ENCODE measurements at regions of chr11 and their contacts with region 1.

Region 1: DNA sequence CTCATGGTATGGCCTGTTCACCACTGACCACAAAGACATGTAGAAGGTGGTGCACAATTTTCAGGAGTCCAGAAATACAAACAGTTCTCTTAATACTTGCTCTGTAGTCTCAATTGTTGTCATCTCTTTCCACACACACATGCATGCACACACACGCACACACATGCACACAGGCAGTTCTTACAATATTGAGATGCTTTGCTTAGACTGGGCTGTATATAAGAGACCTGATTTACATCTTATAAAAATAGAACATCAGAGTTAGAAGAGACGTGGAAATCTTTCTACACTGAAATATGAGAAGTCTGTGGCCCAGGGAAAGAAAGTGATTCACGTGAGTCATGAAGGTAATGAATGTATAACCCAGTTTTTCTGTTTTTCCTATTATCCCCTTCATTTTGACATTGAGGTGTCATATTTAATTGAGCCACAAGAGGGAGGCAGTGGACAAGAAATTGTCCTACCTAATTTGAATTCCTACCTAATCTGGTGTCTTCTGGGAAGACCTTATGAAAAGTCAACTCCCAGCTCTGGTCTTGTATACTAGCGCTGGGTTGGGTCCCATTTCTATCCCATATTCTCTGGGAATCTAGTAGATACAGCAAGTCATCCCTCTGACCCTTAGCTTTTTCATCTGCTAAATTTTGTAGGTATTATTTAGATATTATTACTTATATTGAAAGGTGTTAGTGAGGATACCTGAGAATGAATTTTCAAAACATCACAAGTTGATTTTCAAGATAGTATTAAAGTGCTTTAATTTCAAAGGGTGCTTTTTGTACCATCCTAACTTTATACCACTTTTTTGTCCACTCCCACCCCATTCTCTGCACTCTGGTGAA is 14.9 kb upstream of the MS4A4A start:
- DNase-seq: no peak
- H3K4me3 ChIP-seq: no peak overlapping the region
- H3K27me3 ChIP-seq: no peaks in the 10 kb centered on the region
- CTCF ChIP-seq: peak; percentile 61

Region 2: DNA sequence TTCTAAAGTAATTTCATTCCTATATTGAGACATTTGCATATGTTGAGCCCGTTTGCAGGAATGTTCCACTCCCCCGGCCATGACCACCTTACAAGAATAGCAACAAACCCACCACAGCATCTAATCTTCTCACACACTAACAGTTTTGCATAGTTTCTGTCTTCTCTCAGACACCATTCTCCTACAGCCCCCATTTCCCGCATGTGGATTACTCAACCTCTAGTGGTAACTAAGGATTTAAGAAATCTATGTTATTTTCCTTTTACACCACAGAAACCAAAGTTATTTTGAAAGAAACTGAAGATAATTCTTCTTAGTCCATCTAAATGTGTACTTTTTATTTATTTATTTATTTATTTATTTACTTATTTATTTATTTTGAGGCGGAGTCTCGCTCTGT is 24.9 kb before region 1 on chr11:
- CTCF ChIA-PET with region 1: no interaction called
- POLR2A ChIA-PET with region 1: no interaction called
- DNase-seq: no peak
- H3K4me3 ChIP-seq: no peak overlapping the region
- H3K27me3 ChIP-seq: no peaks in the 10 kb centered on the region
- CTCF ChIP-seq: no peak

Region 3: GRCh38 chr11:60251485-60252212 is 13.9 kb before region 1 on chr11:
- CTCF ChIA-PET with region 1: interaction called, 13 read pairs
- POLR2A ChIA-PET with region 1: no interaction called
- DNase-seq: no peak
- H3K4me3 ChIP-seq: no peak overlapping the region
- H3K27me3 ChIP-seq: no peaks in the 10 kb centered on the region
- CTCF ChIP-seq: no peak